Left colon (tissue), 2 donors: ENCODE measurements at regions of chr1 and their contacts with region 1.

Region 1: DNA sequence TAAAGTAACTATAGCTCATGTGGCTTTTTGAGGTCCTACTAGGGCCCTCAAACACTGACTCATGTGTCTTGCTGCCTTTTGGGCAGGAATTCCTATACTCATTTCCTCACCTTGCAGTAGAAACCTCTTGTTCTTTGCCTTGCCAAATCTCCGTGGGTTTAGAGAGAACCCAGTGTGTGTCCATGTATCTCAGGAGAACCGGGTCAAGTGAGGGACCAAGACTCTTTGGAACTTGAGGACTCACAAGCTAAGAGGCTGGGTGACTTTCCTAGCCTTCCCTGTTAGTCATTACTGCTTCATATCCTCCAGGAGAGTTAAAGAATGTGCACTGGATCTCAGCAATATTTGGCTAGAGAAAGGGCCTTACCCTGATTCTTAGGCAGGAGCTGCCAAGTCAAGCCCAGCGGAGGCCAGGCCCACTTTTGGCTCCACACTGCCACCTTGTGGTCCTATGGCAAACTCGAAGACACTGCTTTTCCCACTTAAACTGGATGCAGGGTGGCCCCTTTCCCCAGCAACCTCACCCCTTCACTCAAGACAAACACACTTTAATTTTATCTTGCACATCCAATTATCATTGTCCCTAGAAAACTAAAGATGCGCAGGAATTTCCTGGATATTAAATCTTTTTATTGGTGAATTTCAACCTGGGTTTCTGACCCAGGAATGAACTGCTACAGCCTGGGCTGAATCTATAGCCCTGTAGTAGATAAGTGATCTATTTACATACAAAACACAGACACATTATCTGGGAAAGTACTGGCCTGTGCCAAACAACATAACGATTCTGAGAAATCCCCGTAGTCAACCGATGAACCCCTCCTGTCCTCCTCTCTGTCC is 10.6 kb downstream of the AVPR1B start:
- DNase-seq: peak; percentile 58 to 85
- ATAC-seq: peak; percentile 83

Region 2: GRCh38 chr1:205983925-205984725 is 122.4 kb before region 1 on chr1:
- intact Hi-C with region 1: loop called in 1 of 2 experiments (anchors 5 kb)
- DNase-seq: peak; percentile 50 to 64
- ATAC-seq: peak; percentile 90

Region 3: GRCh38 chr1:206029484-206029883 is 77.1 kb before region 1 on chr1:
- intact Hi-C with region 1: loop called in 1 of 2 experiments (anchors 10 kb)
- DNase-seq: no peak
- ATAC-seq: no peak

Region 4: DNA sequence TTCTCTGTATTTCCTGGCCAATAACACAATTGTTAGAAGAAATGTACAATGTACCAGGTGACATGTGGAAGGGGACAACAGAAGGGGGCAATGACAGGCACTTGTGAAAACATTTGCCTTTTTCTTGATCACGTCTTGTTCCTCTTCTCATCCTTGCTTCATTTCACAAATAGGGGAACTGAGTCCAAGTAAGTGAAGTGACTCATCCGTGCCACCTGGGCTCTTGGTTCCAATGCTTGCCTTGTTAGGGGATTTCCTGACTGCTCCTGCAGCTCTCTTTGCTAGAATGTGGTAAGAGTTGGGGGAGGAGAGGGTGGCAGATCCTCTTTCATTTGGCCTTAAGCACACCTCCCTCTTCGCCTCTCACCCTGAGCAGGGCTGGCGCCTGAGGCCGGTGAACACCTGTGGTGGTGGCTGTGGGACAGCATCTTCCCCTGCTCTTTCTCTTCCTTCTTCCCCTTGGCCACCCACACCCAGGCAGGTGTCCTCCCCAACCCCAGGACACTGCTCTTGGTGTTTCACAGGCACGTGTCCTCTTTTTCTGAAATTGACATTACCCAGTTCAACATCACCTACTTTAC is 55.8 kb before region 1 on chr1:
- intact Hi-C with region 1: no loop called
- DNase-seq: peak; percentile 32 to 60
- ATAC-seq: peak; percentile 11

Region 5: DNA sequence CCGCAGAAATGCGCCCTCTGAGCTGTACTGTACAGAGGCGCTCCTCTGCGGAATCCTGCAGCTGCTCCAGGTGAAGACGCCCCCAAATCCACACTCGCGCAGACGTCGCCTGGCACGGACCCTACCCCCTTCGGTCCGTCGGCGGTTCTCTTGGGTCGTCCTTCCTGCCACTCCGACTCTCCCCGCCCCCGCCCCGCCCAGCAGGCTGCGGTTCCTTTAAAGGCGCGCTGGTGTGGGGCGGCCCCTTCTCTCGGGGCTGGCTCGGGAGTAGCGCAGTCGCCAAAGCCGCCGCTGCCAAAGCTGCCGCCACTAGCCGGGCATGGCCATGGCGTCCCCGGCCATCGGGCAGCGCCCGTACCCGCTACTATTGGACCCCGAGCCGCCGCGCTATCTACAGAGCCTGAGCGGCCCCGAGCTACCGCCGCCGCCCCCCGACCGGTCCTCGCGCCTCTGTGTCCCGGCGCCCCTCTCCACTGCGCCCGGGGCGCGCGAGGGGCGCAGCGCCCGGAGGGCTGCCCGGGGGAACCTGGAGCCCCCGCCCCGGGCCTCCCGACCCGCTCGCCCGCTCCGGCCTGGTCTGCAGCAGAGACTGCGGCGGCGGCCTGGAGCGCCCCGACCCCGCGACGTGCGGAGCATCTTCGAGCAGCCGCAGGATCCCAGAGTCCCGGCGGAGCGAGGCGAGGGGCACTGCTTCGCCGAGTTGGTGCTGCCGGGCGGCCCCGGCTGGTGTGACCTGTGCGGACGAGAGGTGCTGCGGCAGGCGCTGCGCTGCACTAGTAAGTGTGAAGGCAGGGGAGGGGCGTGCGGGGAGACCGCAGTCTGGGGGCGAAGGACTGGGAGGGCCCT is 401.0 kb after region 1 on chr1 and contains the start of gene RASSF5:
- intact Hi-C with region 1: no loop called
- DNase-seq: peak; percentile 76 to 87
- ATAC-seq: peak; percentile 89
- total RNA-seq, gene RASSF5: 3.3 to 7.7 TPM